Gastrocnemius medialis (tissue), 4 donors: ENCODE measurements at regions of chr7 and their contacts with region 1.

Region 1: GRCh38 chr7:152709287-152710152 is 33.6 kb upstream of the XRCC2 start:
- DNase-seq: no peak
- ATAC-seq: no peak
- H3K4me3 ChIP-seq: no peak overlapping the region
- H3K27ac ChIP-seq: no peak overlapping the region
- H3K4me1 ChIP-seq: peaks cover 3 to 5% of the 10 kb centered on the region in 2 donors
- H3K27me3 ChIP-seq: no peaks in the 10 kb centered on the region
- CTCF ChIP-seq: no peak
- POLR2A ChIP-seq: no peak

Region 2: GRCh38 chr7:152436111-152436930 is 273.2 kb before region 1 on chr7:
- in situ Hi-C with region 1: no loop called
- intact Hi-C with region 1: loop called (anchors 10 kb)
- DNase-seq: peak; percentile 90 to 94
- ATAC-seq: peak; percentile 66 to 70
- H3K4me3 ChIP-seq: peak overlapping the region; percentile 60 to 99 (median 82)
- H3K27ac ChIP-seq: peak overlapping the region; percentile 92 to 100 (median 99)
- H3K4me1 ChIP-seq: peaks cover 24 to 40% of the 10 kb centered on the region in 2 donors
- H3K27me3 ChIP-seq: no peaks in the 10 kb centered on the region
- CTCF ChIP-seq: no peak
- POLR2A ChIP-seq: peak; percentile 57 to 59

Region 3: GRCh38 chr7:152669758-152670157 is 39.8 kb before region 1 on chr7:
- in situ Hi-C with region 1: no loop called
- intact Hi-C with region 1: loop called (anchors 2 kb)
- DNase-seq: no peak
- ATAC-seq: no peak
- H3K4me3 ChIP-seq: no peak overlapping the region
- H3K27ac ChIP-seq: no peak overlapping the region
- H3K4me1 ChIP-seq: peaks cover under 1% of the 10 kb centered on the region in 2 donors
- H3K27me3 ChIP-seq: no peaks in the 10 kb centered on the region
- CTCF ChIP-seq: no peak
- POLR2A ChIP-seq: no peak

Region 4: GRCh38 chr7:152759949-152760853 is 50.7 kb after region 1 on chr7:
- in situ Hi-C with region 1: no loop called
- intact Hi-C with region 1: no loop called
- DNase-seq: peak; percentile 10 to 34
- ATAC-seq: peak; percentile 59 to 69
- H3K4me3 ChIP-seq: peak overlapping the region; percentile 79 to 96 (median 86)
- H3K27ac ChIP-seq: peak overlapping the region; percentile 94 to 100 (median 98)
- H3K4me1 ChIP-seq: peaks cover 23 to 25% of the 10 kb centered on the region in 2 donors
- H3K27me3 ChIP-seq: no peaks in the 10 kb centered on the region
- CTCF ChIP-seq: no peak
- POLR2A ChIP-seq: peak in 1 of 2 donors; percentile 41